ENCODE measurements at regions of chr1 and their contacts with region 1.

Region 1: DNA sequence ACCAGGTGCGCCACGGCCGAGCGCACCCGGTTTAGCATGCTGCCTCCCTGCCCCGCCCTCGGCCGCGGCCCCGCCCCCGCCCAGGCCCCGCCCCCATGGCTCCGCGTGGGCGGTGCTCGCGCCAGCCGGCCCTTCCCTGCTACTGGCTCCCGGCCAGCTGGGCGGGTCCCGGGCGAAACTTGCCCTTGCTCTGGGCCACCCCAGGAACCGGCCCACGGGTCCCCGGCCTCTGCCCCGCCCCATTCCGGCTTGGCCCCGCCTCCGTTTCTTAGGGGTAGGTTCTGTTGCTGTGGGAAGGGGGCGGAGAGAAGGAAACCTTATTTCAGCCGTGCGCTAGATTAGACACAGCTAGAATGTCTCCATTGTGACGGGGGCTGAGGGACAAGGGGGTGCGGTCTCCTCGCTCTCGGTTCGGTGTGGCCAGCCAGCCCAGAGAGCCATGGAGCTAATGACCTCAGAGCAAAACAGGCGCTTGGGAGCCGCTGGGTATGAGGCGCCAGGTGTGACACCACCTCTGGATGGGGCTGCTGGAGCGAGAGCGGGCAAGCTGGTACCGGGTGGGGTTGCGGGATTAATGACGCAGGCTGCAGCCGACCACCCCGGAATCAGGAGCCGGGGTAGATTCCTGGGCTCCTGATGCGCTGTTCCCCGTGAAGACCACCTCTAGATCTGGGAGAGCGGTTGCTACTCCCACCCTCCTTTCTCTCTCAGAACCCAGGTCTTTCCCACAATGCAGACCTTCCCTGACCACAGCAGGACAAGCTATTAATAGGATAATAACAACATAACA is at the start of gene PPM1J:
- DNase-seq: peak; percentile 91 to 99 (median 96)
- ATAC-seq: peak; percentile 84
- H3K4me3 ChIP-seq: peak within 1 kb of the TSS; percentile 69
- H3K4me3 Mint-ChIP-seq: peak within 1 kb of the TSS; percentile 89
- H3K27ac ChIP-seq: peak within 1 kb of the TSS in 1 of 2 donors; percentile 39
- H3K27ac Mint-ChIP-seq: peak within 1 kb of the TSS; percentile 81
- H3K4me1 ChIP-seq: peaks cover 37% of the 10 kb centered on the region
- H3K4me1 Mint-ChIP-seq: peaks cover 24% of the 10 kb centered on the region
- H3K27me3 ChIP-seq: peaks cover 15 to 22% of the 10 kb centered on the region in 2 experiments
- H3K27me3 Mint-ChIP-seq: peaks cover 35% of the 10 kb centered on the region
- CTCF ChIP-seq: no peak
- total RNA-seq, gene PPM1J: 0.39 to 0.49 TPM

Region 2: GRCh38 chr1:112660072-112660471 is 55.4 kb before region 1 on chr1:
- CTCF ChIA-PET with region 1: no interaction called
- POLR2A ChIA-PET with region 1: no interaction called
- intact Hi-C with region 1: no loop called
- DNase-seq: no peak
- ATAC-seq: no peak
- H3K4me3 ChIP-seq: no peak overlapping the region
- H3K4me3 Mint-ChIP-seq: no peak overlapping the region
- H3K27ac ChIP-seq: no peak overlapping the region
- H3K27ac Mint-ChIP-seq: no peak overlapping the region
- H3K4me1 ChIP-seq: no peaks in the 10 kb centered on the region
- H3K4me1 Mint-ChIP-seq: no peaks in the 10 kb centered on the region
- H3K27me3 ChIP-seq: no peaks in the 10 kb centered on the region
- H3K27me3 Mint-ChIP-seq: no peaks in the 10 kb centered on the region
- CTCF ChIP-seq: no peak

Region 3: GRCh38 chr1:112674439-112674985 is 40.9 kb before region 1 on chr1 and contains the start of gene MOV10:
- CTCF ChIA-PET with region 1: interaction called, 9 read pairs
- POLR2A ChIA-PET with region 1: interaction called, 46 read pairs
- intact Hi-C with region 1: no loop called
- DNase-seq: peak; percentile 31 to 80 (median 42)
- ATAC-seq: peak; percentile 55
- H3K4me3 ChIP-seq: peak within 1 kb of the TSS; percentile 93
- H3K4me3 Mint-ChIP-seq: peak within 1 kb of the TSS; percentile 98
- H3K27ac ChIP-seq: peak within 1 kb of the TSS; percentile 38 to 68
- H3K27ac Mint-ChIP-seq: peak within 1 kb of the TSS; percentile 65
- H3K4me1 ChIP-seq: peaks cover 22% of the 10 kb centered on the region
- H3K4me1 Mint-ChIP-seq: peaks cover 69% of the 10 kb centered on the region
- H3K27me3 ChIP-seq: no peaks in the 10 kb centered on the region
- H3K27me3 Mint-ChIP-seq: no peaks in the 10 kb centered on the region
- CTCF ChIP-seq: no peak
- total RNA-seq, gene MOV10: 80.6 to 89.3 TPM

Region 4: DNA sequence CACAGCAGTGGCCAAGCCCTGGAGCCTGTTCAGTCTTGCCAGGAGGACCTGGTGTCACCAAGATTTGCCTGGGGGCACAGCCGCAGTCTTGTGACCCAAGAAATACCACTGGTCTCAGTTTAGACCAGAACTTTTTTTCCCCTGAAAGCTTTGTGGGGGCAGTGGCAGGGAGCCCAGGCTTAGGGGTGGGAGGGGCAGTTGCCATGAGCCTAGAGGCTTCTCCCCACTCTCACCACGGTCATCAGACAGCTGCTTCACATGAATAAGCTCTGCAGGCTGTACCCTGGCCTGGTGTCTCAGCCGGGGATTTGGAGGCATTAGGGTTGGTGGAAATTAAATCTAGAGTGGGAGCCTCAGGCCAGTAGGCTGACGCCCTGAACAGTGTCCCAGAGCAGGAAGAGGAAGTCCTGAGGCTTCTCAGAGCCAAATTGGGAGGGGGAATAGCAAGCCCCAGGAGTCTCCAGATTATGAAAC is 166.8 kb after region 1 on chr1:
- CTCF ChIA-PET with region 1: interaction called, 3 read pairs
- POLR2A ChIA-PET with region 1: no interaction called
- intact Hi-C with region 1: loop called in 1 of 2 experiments (anchors 5 kb)
- DNase-seq: no peak
- ATAC-seq: no peak
- H3K4me3 ChIP-seq: no peak overlapping the region
- H3K4me3 Mint-ChIP-seq: no peak overlapping the region
- H3K27ac ChIP-seq: no peak overlapping the region
- H3K27ac Mint-ChIP-seq: no peak overlapping the region
- H3K4me1 ChIP-seq: no peaks in the 10 kb centered on the region
- H3K4me1 Mint-ChIP-seq: no peaks in the 10 kb centered on the region
- H3K27me3 ChIP-seq: no peaks in the 10 kb centered on the region
- H3K27me3 Mint-ChIP-seq: peaks cover 12% of the 10 kb centered on the region
- CTCF ChIP-seq: no peak

Region 5: DNA sequence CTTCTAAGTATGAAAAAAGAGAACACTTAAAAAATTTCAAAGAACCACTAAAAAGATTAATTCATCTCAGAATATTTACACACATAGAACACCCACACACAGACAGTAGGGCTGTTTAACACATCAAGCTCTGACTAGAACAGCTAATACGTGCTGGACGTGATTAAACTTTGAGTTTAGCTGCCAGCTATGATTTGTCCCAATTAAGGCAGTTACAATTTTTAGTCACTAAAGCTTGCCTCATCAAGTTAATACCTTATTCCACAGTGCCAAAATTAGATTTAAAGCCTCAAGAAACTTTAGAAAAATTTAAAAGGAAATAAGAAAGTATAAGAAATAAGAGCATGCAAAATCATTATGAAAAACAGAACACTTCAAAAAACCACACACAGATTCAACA is 221.6 kb after region 1 on chr1:
- CTCF ChIA-PET with region 1: no interaction called
- POLR2A ChIA-PET with region 1: no interaction called
- intact Hi-C with region 1: no loop called
- DNase-seq: no peak
- ATAC-seq: no peak
- H3K4me3 ChIP-seq: no peak overlapping the region
- H3K4me3 Mint-ChIP-seq: no peak overlapping the region
- H3K27ac ChIP-seq: no peak overlapping the region
- H3K27ac Mint-ChIP-seq: no peak overlapping the region
- H3K4me1 ChIP-seq: no peaks in the 10 kb centered on the region
- H3K4me1 Mint-ChIP-seq: peaks cover 28% of the 10 kb centered on the region
- H3K27me3 ChIP-seq: no peaks in the 10 kb centered on the region
- H3K27me3 Mint-ChIP-seq: no peaks in the 10 kb centered on the region
- CTCF ChIP-seq: no peak

Region 6: GRCh38 chr1:113452921-113453770 is 737.7 kb after region 1 on chr1:
- CTCF ChIA-PET with region 1: no interaction called
- POLR2A ChIA-PET with region 1: no interaction called
- intact Hi-C with region 1: loop called in 1 of 2 experiments (anchors 2 kb)
- DNase-seq: peak in 5 of 14 experiments; percentile 0 to 47 (median 21)
- ATAC-seq: peak; percentile 59
- H3K4me3 ChIP-seq: no peak overlapping the region
- H3K4me3 Mint-ChIP-seq: no peak overlapping the region
- H3K27ac ChIP-seq: no peak overlapping the region
- H3K27ac Mint-ChIP-seq: no peak overlapping the region
- H3K4me1 ChIP-seq: no peaks in the 10 kb centered on the region
- H3K4me1 Mint-ChIP-seq: no peaks in the 10 kb centered on the region
- H3K27me3 ChIP-seq: no peaks in the 10 kb centered on the region
- H3K27me3 Mint-ChIP-seq: no peaks in the 10 kb centered on the region
- CTCF ChIP-seq: peak; percentile 65

Region 7: DNA sequence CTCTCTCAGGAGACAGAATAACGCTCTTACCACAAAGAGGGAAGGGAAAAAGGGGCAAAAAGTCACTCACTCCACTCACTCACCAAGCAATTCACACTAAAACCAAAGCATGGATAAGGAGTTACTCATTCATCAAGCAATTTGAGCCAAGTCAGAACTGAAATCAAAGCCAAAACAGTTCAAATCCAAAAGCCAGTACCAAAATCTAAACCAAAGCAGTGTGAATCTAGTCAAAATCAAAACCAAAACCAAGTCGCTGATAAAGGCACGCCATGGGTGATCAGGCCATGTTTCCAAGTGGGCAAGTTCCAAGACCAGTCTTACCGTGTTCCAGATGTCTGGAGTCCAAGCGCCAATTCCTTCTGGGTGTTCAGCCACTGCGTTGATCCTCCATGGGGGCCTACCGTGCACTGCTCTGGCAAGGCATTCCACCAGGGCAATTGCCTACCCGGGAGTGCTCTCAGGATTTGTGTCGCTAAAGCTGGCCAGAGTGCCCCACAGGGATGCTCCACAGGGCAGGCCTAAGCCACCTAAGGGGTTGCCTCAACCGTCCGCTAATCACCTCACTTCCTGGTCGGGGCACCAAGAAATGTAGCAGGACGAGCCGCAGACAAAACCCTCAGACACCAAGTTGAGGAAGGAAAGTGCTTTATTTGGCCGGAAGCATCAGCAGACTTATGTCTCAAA is 1653.2 kb after region 1 on chr1:
- CTCF ChIA-PET with region 1: no interaction called
- POLR2A ChIA-PET with region 1: no interaction called
- intact Hi-C with region 1: no loop called
- DNase-seq: no peak
- ATAC-seq: no peak
- H3K4me3 ChIP-seq: no peak overlapping the region
- H3K4me3 Mint-ChIP-seq: no peak overlapping the region
- H3K27ac ChIP-seq: no peak overlapping the region
- H3K27ac Mint-ChIP-seq: no peak overlapping the region
- H3K4me1 ChIP-seq: no peaks in the 10 kb centered on the region
- H3K4me1 Mint-ChIP-seq: no peaks in the 10 kb centered on the region
- H3K27me3 ChIP-seq: no peaks in the 10 kb centered on the region
- H3K27me3 Mint-ChIP-seq: peaks cover 3% of the 10 kb centered on the region
- CTCF ChIP-seq: no peak

Measured in CD4-positive, alpha-beta T cell (primary cell).